ENCODE measurements at regions of chr12 and their contacts with region 1.

Region 1: DNA sequence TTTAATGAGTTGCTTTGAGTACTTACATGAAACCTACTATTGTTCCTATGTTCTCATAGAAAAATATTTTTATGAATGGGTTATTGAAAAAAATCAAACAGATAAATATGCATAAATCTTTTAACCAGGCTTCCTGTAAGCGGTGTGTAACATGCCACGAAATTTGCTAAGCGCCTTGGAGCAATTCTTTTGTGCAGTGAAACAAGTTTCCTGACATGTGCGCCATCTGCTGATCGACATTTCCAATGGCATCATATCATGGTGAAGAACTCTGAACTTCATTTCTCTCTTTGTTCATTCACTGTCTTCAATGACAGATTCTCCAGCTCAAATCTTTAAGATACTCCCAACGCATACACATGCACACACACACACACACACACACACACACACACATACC is 145.6 kb upstream of the NAV3 start:
- DNase-seq: peak; percentile 62
- H3K4me3 ChIP-seq: no peak overlapping the region
- H3K27ac ChIP-seq: no peak overlapping the region
- H3K27me3 ChIP-seq: no peaks in the 10 kb centered on the region
- CTCF ChIP-seq: peak; percentile 77

Region 2: GRCh38 chr12:77152623-77153193 is 532.4 kb before region 1 on chr12:
- CTCF ChIA-PET with region 1: interaction called, 128 read pairs
- POLR2A ChIA-PET with region 1: no interaction called
- DNase-seq: peak; percentile 20
- H3K4me3 ChIP-seq: no peak overlapping the region
- H3K27ac ChIP-seq: no peak overlapping the region
- H3K27me3 ChIP-seq: no peaks in the 10 kb centered on the region
- CTCF ChIP-seq: peak; percentile 76

Region 3: DNA sequence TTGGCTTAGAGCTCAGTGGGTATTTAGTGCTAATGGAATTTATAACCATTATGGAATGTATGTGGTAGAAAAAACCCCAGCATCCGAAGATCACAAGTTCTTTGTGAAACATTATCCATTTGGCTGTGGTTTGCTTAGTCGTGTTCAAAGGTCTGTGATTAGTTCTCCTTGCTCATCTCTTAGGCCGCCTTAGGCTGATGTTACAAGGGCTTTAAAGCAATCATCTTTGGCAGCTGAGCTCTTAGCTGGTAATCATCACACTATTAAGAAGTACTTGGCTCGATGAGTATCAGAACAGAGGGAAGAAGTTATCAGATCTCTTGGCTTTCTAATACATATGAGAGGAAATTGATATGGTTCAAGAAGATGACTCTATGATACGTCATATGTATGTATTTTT is 495.7 kb before region 1 on chr12:
- CTCF ChIA-PET with region 1: interaction called, 11 read pairs
- POLR2A ChIA-PET with region 1: no interaction called
- DNase-seq: peak; percentile 59
- H3K4me3 ChIP-seq: no peak overlapping the region
- H3K27ac ChIP-seq: peak overlapping the region; percentile 73
- H3K27me3 ChIP-seq: no peaks in the 10 kb centered on the region
- CTCF ChIP-seq: no peak

Region 4: GRCh38 chr12:77855548-77855947 is 170.4 kb after region 1 on chr12:
- CTCF ChIA-PET with region 1: no interaction called
- POLR2A ChIA-PET with region 1: no interaction called
- DNase-seq: no peak
- H3K4me3 ChIP-seq: no peak overlapping the region
- H3K27ac ChIP-seq: no peak overlapping the region
- H3K27me3 ChIP-seq: no peaks in the 10 kb centered on the region
- CTCF ChIP-seq: no peak